Calu3 (cell line): ENCODE measurements at regions of chr3 and their contacts with region 1.

Region 1: DNA sequence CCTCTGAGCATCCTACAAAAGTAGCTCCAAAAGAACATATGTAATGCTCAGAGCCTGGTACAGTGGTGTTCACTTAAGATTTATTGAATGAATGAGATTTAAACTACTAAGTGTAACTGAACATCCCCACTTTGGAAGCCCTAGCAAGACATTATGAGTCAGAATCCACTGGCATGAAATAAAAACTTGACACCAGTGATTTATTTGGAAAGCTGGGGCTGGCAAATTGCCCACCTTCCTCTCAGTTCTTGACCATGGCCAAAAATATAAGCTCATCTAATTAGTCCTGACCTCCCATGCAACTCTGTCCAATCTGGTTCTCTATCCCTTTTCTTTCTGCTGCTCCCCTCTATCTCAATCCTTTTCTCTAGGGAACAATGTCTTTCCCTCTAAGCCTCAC is 418.0 kb downstream of the PLCL2 start:
- DNase-seq: no peak
- H3K4me3 Mint-ChIP-seq: no peak overlapping the region
- H3K27ac Mint-ChIP-seq: no peak overlapping the region
- H3K4me1 Mint-ChIP-seq: no peaks in the 10 kb centered on the region
- H3K27me3 Mint-ChIP-seq: no peaks in the 10 kb centered on the region
- CTCF ChIP-seq: no peak

Region 2: GRCh38 chr3:17360991-17361390 is 58.2 kb after region 1 on chr3:
- CTCF ChIA-PET with region 1: no interaction called
- intact Hi-C with region 1: no loop called
- DNase-seq: no peak
- H3K4me3 Mint-ChIP-seq: no peak overlapping the region
- H3K27ac Mint-ChIP-seq: no peak overlapping the region
- H3K4me1 Mint-ChIP-seq: no peaks in the 10 kb centered on the region
- H3K27me3 Mint-ChIP-seq: no peaks in the 10 kb centered on the region
- CTCF ChIP-seq: no peak

Region 3: GRCh38 chr3:17412950-17413530 is 110.3 kb after region 1 on chr3:
- CTCF ChIA-PET with region 1: no interaction called
- intact Hi-C with region 1: loop called (anchors 1 kb)
- DNase-seq: peak; percentile 21
- H3K4me3 Mint-ChIP-seq: no peak overlapping the region
- H3K27ac Mint-ChIP-seq: no peak overlapping the region
- H3K4me1 Mint-ChIP-seq: no peaks in the 10 kb centered on the region
- H3K27me3 Mint-ChIP-seq: no peaks in the 10 kb centered on the region
- CTCF ChIP-seq: peak; percentile 57

Region 4: GRCh38 chr3:17544632-17545031 is 241.9 kb after region 1 on chr3:
- CTCF ChIA-PET with region 1: interaction called, 19 read pairs
- intact Hi-C with region 1: no loop called
- DNase-seq: no peak
- H3K4me3 Mint-ChIP-seq: no peak overlapping the region
- H3K27ac Mint-ChIP-seq: no peak overlapping the region
- H3K4me1 Mint-ChIP-seq: no peaks in the 10 kb centered on the region
- H3K27me3 Mint-ChIP-seq: no peaks in the 10 kb centered on the region
- CTCF ChIP-seq: no peak

Region 5: GRCh38 chr3:18657858-18658820 is 1355.4 kb after region 1 on chr3:
- CTCF ChIA-PET with region 1: interaction called, 11 read pairs
- intact Hi-C with region 1: no loop called
- DNase-seq: peak; percentile 37
- H3K4me3 Mint-ChIP-seq: no peak overlapping the region
- H3K27ac Mint-ChIP-seq: no peak overlapping the region
- H3K4me1 Mint-ChIP-seq: no peaks in the 10 kb centered on the region
- H3K27me3 Mint-ChIP-seq: no peaks in the 10 kb centered on the region
- CTCF ChIP-seq: no peak